Naive thymus-derived CD4-positive, alpha-beta T cell (primary cell): ENCODE measurements at regions of chr11 and their contacts with region 1.

Region 1: GRCh38 chr11:69088676-69089146 is 40.0 kb downstream of the TPCN2 start:
- DNase-seq: peak in 7 of 9 donors; percentile 23 to 54 (median 38)
- ATAC-seq: peak; percentile 78
- H3K4me3 ChIP-seq: no peak overlapping the region
- H3K4me3 Mint-ChIP-seq: no peak overlapping the region
- H3K27ac ChIP-seq: no peak overlapping the region
- H3K27ac Mint-ChIP-seq: peak overlapping the region in 2 of 9 donors; percentile 19 to 36
- H3K4me1 ChIP-seq: no peaks in the 10 kb centered on the region
- H3K4me1 Mint-ChIP-seq: peaks cover 0 to 9% (median 0%) of the 10 kb centered on the region in 7 donors
- H3K27me3 ChIP-seq: no peaks in the 10 kb centered on the region
- H3K27me3 Mint-ChIP-seq: no peaks in the 10 kb centered on the region

Region 2: GRCh38 chr11:68714060-68714856 is 374.5 kb before region 1 on chr11:
- CTCF ChIA-PET with region 1: no interaction called
- POLR2A ChIA-PET with region 1: no interaction called
- intact Hi-C with region 1: no loop called
- DNase-seq: no peak
- ATAC-seq: no peak
- H3K4me3 ChIP-seq: no peak overlapping the region
- H3K4me3 Mint-ChIP-seq: no peak overlapping the region
- H3K27ac ChIP-seq: no peak overlapping the region
- H3K27ac Mint-ChIP-seq: peak overlapping the region in 1 of 9 donors; percentile 10
- H3K4me1 ChIP-seq: no peaks in the 10 kb centered on the region
- H3K4me1 Mint-ChIP-seq: peaks cover 0 to 2% (median 0%) of the 10 kb centered on the region in 7 donors
- H3K27me3 ChIP-seq: no peaks in the 10 kb centered on the region
- H3K27me3 Mint-ChIP-seq: peaks cover 0 to 7% (median 0%) of the 10 kb centered on the region in 5 donors

Region 3: GRCh38 chr11:68956142-68956541 is 132.6 kb before region 1 on chr11:
- CTCF ChIA-PET with region 1: no interaction called
- POLR2A ChIA-PET with region 1: no interaction called
- intact Hi-C with region 1: loop called in 1 of 2 experiments (anchors 1 kb)
- DNase-seq: peak in 1 of 9 donors; percentile 8
- ATAC-seq: peak; percentile 51
- H3K4me3 ChIP-seq: no peak overlapping the region
- H3K4me3 Mint-ChIP-seq: no peak overlapping the region
- H3K27ac ChIP-seq: no peak overlapping the region
- H3K27ac Mint-ChIP-seq: no peak overlapping the region
- H3K4me1 ChIP-seq: no peaks in the 10 kb centered on the region
- H3K4me1 Mint-ChIP-seq: peaks cover 0 to 6% (median 0%) of the 10 kb centered on the region in 7 donors
- H3K27me3 ChIP-seq: no peaks in the 10 kb centered on the region
- H3K27me3 Mint-ChIP-seq: no peaks in the 10 kb centered on the region